ENCODE measurements at regions of chrX and their contacts with region 1.

Region 1: DNA sequence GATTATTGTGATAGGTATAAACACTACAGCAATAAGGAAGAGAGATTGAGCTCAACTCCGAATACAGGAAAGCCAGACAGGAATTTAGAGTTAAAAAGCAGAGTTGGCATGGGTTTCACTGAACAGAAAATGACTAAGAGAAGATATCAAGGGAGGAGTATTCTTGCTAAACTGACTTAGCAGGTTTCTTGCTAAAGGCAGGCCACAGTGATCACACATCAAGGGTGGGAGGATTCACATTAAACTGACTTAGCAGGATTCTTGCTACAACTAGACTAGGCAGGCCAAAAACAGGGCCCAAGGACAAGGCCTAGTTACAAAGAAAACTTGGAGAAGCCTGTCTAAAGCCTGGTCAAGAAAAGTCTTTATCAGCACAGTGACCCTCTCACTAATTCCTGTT is 195.1 kb downstream of the MAGEB5 start:
- DNase-seq: no peak
- ATAC-seq: no peak
- H3K4me3 ChIP-seq: no peak overlapping the region
- H3K4me3 Mint-ChIP-seq: no peak overlapping the region
- H3K27ac ChIP-seq: no peak overlapping the region
- H3K27ac Mint-ChIP-seq: no peak overlapping the region
- H3K4me1 ChIP-seq: no peaks in the 10 kb centered on the region
- H3K4me1 Mint-ChIP-seq: no peaks in the 10 kb centered on the region
- H3K27me3 ChIP-seq: no peaks in the 10 kb centered on the region
- H3K27me3 Mint-ChIP-seq: no peaks in the 10 kb centered on the region

Region 2: GRCh38 chrX:26470941-26471340 is 59.9 kb after region 1 on chrX:
- CTCF ChIA-PET with region 1: no interaction called
- POLR2A ChIA-PET with region 1: no interaction called
- DNase-seq: no peak
- ATAC-seq: no peak
- H3K4me3 ChIP-seq: no peak overlapping the region
- H3K4me3 Mint-ChIP-seq: no peak overlapping the region
- H3K27ac ChIP-seq: no peak overlapping the region
- H3K27ac Mint-ChIP-seq: no peak overlapping the region
- H3K4me1 ChIP-seq: no peaks in the 10 kb centered on the region
- H3K4me1 Mint-ChIP-seq: no peaks in the 10 kb centered on the region
- H3K27me3 ChIP-seq: no peaks in the 10 kb centered on the region
- H3K27me3 Mint-ChIP-seq: no peaks in the 10 kb centered on the region

Region 3: DNA sequence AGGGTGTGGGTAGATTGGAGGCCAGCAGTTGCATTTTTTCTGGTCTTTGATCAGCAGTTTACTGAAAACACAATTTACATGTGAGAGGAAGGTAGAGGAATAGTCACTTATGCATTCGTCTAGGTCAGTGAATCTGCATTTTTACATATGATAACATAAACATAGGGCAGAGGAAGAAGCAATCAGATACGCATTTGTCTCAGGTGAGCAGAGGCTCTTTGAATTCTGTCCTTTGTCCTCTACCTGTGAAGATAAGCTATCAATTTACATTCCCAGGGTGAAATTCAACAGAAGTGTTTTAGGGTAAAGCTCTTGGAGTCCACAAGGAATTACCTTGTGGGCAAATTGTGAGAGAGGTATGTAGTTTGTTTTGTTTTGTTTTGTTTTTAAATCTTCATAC is 111.5 kb after region 1 on chrX:
- CTCF ChIA-PET with region 1: no interaction called
- POLR2A ChIA-PET with region 1: interaction called in 1 of 2 experiments, 13 read pairs
- DNase-seq: no peak
- ATAC-seq: no peak
- H3K4me3 ChIP-seq: no peak overlapping the region
- H3K4me3 Mint-ChIP-seq: no peak overlapping the region
- H3K27ac ChIP-seq: no peak overlapping the region
- H3K27ac Mint-ChIP-seq: no peak overlapping the region
- H3K4me1 ChIP-seq: no peaks in the 10 kb centered on the region
- H3K4me1 Mint-ChIP-seq: no peaks in the 10 kb centered on the region
- H3K27me3 ChIP-seq: no peaks in the 10 kb centered on the region
- H3K27me3 Mint-ChIP-seq: no peaks in the 10 kb centered on the region

Measured in T-cell (primary cell).